ENCODE measurements at regions of chr10 and their contacts with region 1.

Region 1: DNA sequence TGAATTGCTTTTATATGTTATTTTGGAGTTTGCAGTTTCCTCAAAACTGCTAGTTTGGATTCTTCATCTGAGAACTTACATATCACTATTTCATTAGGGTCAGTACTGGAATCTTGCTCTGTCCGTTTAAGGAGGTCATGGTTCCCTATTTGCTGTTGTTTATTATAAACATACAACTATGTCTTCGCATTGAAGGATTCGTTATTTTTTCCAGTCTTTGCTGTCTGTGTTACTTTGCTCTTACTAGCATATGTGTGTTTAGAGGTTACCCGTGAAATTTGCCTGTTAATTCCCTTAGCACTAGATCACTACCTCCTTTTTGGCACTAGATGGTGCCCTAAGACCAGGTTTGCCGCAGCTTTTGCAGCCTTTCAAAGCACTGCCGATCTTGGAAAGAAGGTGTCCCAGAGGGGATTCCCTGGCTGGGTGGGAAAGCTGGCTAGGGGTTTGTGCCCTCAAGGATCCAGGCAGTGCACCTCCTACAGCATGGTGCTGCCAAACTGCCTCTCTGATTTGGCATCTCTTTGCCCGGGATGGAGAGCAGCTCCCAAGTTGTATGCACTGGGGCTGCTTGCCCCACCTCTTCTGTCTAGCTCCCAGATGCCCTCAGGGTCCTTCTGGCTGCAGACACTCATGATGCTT is 103.1 kb upstream of the APBB1IP start:
- DNase-seq: peak; percentile 51 to 86
- ATAC-seq: peak; percentile 88 to 96 (median 94)
- H3K4me3 ChIP-seq: peak overlapping the region; percentile 29
- H3K4me3 Mint-ChIP-seq: peak overlapping the region; percentile 85
- H3K27ac ChIP-seq: no peak overlapping the region
- H3K27ac Mint-ChIP-seq: peak overlapping the region; percentile 56 to 57
- H3K4me1 ChIP-seq: peaks cover 4% of the 10 kb centered on the region
- H3K4me1 Mint-ChIP-seq: no peaks in the 10 kb centered on the region
- H3K27me3 ChIP-seq: no peaks in the 10 kb centered on the region
- H3K27me3 Mint-ChIP-seq: no peaks in the 10 kb centered on the region
- CTCF ChIP-seq: peak; percentile 87

Region 2: GRCh38 chr10:25875556-25876165 is 459.4 kb before region 1 on chr10:
- intact Hi-C with region 1: loop called (anchors 5 kb)
- DNase-seq: peak in 1 of 2 donors; percentile 73
- ATAC-seq: peak in 2 of 3 donors; percentile 59 to 75
- H3K4me3 ChIP-seq: no peak overlapping the region
- H3K4me3 Mint-ChIP-seq: no peak overlapping the region
- H3K27ac ChIP-seq: no peak overlapping the region
- H3K27ac Mint-ChIP-seq: no peak overlapping the region
- H3K4me1 ChIP-seq: no peaks in the 10 kb centered on the region
- H3K4me1 Mint-ChIP-seq: no peaks in the 10 kb centered on the region
- H3K27me3 ChIP-seq: no peaks in the 10 kb centered on the region
- H3K27me3 Mint-ChIP-seq: peaks cover 0 to 3% of the 10 kb centered on the region in 2 donors
- CTCF ChIP-seq: peak; percentile 80

Region 3: GRCh38 chr10:26314265-26315013 is 20.6 kb before region 1 on chr10:
- intact Hi-C with region 1: no loop called
- DNase-seq: no peak
- ATAC-seq: no peak
- H3K4me3 ChIP-seq: no peak overlapping the region
- H3K4me3 Mint-ChIP-seq: no peak overlapping the region
- H3K27ac ChIP-seq: no peak overlapping the region
- H3K27ac Mint-ChIP-seq: no peak overlapping the region
- H3K4me1 ChIP-seq: no peaks in the 10 kb centered on the region
- H3K4me1 Mint-ChIP-seq: no peaks in the 10 kb centered on the region
- H3K27me3 ChIP-seq: no peaks in the 10 kb centered on the region
- H3K27me3 Mint-ChIP-seq: peaks cover 16 to 49% of the 10 kb centered on the region in 2 donors
- CTCF ChIP-seq: no peak

Region 4: DNA sequence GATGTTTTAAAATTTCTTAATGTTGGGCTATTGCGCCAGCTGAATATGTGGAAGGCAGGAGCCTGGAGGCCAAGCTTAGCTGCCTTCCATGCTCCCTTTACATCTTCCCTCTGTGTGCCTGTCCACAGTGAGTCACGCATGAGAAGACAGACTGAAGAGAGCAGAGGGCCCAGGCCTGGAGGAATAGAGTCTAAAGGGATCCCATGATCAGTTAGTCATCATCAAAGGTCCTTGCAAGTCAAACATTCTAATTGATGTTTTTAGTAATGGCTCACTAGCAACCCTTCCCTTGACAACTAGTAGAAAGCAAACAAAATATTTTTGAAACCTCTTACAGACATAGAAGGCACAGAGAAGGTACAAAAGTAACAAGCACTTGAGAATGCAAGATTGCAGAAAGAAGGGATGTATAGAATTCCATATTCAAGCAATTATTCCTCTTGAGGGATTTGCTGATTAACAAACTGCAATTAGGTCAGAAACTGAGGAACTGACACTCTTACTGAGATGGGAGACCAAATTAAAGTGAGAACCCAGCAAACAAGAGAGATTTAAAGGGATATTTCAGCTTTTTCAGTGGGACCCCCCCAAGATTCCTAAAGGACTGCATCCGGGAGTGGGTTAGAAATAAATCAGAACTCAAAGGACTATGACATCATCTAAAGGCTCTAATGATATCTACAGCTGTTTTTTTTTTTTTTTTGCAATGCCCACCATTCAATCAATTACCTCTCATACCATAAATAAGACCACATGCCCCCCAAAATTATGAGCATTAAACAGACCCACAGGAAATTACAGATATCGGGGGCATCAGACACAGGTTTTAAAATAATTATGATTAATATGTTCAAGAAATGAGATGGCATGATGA is 72.6 kb after region 1 on chr10:
- intact Hi-C with region 1: no loop called
- DNase-seq: peak in 1 of 2 donors; percentile 12
- ATAC-seq: peak in 1 of 3 donors; percentile 15
- H3K4me3 ChIP-seq: no peak overlapping the region
- H3K4me3 Mint-ChIP-seq: no peak overlapping the region
- H3K27ac ChIP-seq: no peak overlapping the region
- H3K27ac Mint-ChIP-seq: peak overlapping the region in 1 of 2 donors; percentile 20
- H3K4me1 ChIP-seq: no peaks in the 10 kb centered on the region
- H3K4me1 Mint-ChIP-seq: no peaks in the 10 kb centered on the region
- H3K27me3 ChIP-seq: no peaks in the 10 kb centered on the region
- H3K27me3 Mint-ChIP-seq: no peaks in the 10 kb centered on the region
- CTCF ChIP-seq: no peak

Region 5: GRCh38 chr10:26437637-26438461 is 102.8 kb after region 1 on chr10 and contains the start of gene APBB1IP:
- intact Hi-C with region 1: loop called (anchors 2 kb)
- DNase-seq: peak; percentile 58 to 76
- ATAC-seq: peak; percentile 49 to 82 (median 58)
- H3K4me3 ChIP-seq: peak within 1 kb of the TSS; percentile 70
- H3K4me3 Mint-ChIP-seq: peak within 1 kb of the TSS; percentile 97
- H3K27ac ChIP-seq: peak within 1 kb of the TSS; percentile 89
- H3K27ac Mint-ChIP-seq: peak within 1 kb of the TSS; percentile 85 to 97
- H3K4me1 ChIP-seq: peaks cover 24% of the 10 kb centered on the region
- H3K4me1 Mint-ChIP-seq: peaks cover 50 to 56% of the 10 kb centered on the region in 2 donors
- H3K27me3 ChIP-seq: no peaks in the 10 kb centered on the region
- H3K27me3 Mint-ChIP-seq: no peaks in the 10 kb centered on the region
- CTCF ChIP-seq: no peak
- total RNA-seq, gene APBB1IP: 92.5 to 119 (median 100) TPM

Region 6: DNA sequence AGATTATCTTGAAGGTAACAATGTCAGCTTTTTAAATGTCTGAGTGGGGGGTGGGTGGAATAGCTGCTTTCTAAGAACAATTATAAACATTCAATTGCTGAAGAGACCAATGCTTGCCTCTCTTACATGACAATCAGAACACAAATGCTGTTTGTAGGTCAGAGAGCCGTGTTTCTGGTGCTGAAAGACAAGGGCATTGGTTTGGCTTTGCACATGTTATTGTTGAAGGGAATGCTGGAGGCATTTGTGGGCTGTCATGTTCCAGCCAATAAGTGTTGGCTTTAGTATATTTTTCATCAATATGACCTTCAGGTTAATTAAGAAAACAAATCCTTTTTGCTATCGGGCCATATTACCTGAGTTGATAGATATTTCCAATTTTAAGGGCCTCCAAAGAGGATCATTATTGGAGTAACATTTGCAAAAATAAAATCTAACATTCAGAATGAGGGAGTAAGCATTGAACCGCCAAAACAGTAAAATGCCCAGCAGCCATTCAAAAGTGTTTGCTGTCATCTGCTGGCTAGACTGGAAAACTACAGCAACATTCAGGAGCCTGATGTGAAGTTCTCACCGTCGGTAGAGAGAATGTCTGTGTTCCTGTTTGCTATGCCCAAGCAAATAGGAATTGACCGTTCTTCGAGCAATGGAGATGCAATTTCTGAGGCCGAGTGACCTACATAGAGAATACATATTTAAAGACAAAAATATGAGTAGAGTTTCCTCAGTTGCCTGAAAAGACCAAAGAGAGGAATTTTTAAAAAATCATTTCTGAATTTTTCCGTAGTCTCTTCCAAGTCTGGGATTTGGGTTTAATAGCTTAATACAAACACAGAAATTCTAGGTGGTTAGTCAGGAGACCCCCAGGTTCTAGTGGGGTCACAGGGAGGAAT is 221.9 kb after region 1 on chr10:
- intact Hi-C with region 1: loop called (anchors 1 kb)
- DNase-seq: peak in 1 of 2 donors; percentile 73
- ATAC-seq: peak in 2 of 3 donors; percentile 58 to 62
- H3K4me3 ChIP-seq: no peak overlapping the region
- H3K4me3 Mint-ChIP-seq: no peak overlapping the region
- H3K27ac ChIP-seq: no peak overlapping the region
- H3K27ac Mint-ChIP-seq: peak overlapping the region; percentile 21 to 45
- H3K4me1 ChIP-seq: no peaks in the 10 kb centered on the region
- H3K4me1 Mint-ChIP-seq: peaks cover 20 to 21% of the 10 kb centered on the region in 2 donors
- H3K27me3 ChIP-seq: no peaks in the 10 kb centered on the region
- H3K27me3 Mint-ChIP-seq: no peaks in the 10 kb centered on the region
- CTCF ChIP-seq: peak; percentile 88

Region 7: GRCh38 chr10:26881600-26882331 is 546.7 kb after region 1 on chr10:
- intact Hi-C with region 1: loop called (anchors 1 kb)
- DNase-seq: peak in 1 of 2 donors; percentile 70
- ATAC-seq: peak; percentile 71 to 93 (median 81)
- H3K4me3 ChIP-seq: no peak overlapping the region
- H3K4me3 Mint-ChIP-seq: no peak overlapping the region
- H3K27ac ChIP-seq: no peak overlapping the region
- H3K27ac Mint-ChIP-seq: no peak overlapping the region
- H3K4me1 ChIP-seq: no peaks in the 10 kb centered on the region
- H3K4me1 Mint-ChIP-seq: no peaks in the 10 kb centered on the region
- H3K27me3 ChIP-seq: peaks cover 6% of the 10 kb centered on the region
- H3K27me3 Mint-ChIP-seq: peaks cover 14 to 40% of the 10 kb centered on the region in 2 donors
- CTCF ChIP-seq: peak; percentile 80

Measured in natural killer cell (primary cell).